ENCODE measurements at regions of chr1 and their contacts with region 1.

Region 1: DNA sequence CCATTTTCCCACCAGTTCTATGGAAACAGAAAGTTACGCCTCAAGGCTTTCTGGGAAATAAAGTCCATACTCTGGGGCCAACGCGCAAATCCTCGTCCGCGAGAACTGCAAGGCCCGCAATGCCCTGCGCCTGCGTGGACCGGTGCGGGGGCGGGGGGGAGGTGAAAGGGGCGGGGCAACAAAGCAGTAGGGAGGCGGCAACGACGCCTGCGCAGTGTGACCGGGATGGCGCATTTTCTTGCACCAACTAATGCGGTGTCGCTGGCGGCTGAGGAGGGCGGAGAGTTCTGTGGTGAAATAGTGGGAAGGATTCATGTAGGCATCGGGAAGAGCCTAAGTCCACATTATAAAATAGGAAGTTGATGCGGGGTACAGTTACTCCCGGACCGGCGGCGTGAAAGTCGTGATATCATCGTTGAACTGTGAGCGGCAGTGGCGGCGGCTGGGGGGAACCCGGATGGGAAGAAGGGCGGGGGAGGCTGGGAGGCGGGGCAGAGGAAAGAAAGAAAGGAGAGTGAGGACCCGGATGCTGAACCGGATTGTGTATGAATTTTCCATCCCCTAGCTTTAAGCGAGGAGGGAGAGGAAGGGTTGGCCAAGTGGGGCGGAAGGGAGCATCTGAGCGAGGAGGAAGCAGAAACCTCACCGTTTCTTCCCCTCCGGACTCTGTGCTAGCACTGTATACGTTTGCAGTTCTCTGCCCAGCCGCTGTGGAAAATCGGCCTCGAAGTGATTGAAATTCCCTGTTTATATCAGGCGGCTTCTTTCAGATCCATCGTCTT is at the start of gene GGPS1:
- DNase-seq: peak; percentile 99
- total RNA-seq, gene GGPS1: 30.8 to 36.9 TPM

Region 2: DNA sequence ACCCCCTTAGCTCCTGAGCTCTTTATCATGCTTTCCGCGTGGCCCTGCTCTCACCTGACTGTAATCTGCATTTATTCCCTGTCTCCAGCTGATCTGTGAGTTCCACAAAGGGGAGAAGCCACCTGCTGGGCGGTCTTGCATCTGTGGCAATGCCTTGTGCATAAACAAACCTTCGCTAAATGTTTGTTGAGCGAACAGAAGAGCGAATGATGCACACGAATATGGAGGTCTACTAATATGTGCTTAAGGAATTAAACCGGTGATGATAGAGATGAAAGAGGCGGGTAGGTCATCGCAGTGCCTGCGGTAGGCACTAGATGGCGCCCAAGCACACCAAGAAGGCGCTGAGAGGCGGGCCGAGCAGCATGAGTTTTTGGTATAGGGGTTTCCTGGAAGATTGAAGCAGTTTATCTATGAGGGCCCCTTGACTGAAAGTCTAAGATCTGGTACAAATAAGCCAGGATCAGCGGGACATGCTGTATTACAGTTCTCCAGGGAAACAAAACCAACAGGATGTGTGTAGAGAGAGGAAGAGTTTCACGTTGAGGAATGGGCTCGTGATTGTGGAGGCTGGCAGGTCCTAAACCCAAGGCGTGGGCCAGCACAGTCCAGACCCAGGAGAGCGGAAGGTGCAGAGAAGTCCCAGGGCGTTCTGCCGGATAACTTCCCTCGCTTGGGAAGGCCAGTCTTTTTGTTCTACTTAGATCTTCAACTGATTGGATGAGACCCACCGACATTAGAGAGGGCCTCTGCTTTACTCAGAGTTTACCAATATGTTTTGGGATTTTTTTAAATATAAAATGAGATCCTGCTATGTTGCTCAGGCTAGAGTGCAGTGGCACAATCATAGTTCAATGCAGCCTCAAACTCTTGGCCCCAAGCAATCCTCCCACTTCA is 234.6 kb before region 1 on chr1:
- intact Hi-C with region 1: no loop called
- DNase-seq: peak; percentile 93

Region 3: DNA sequence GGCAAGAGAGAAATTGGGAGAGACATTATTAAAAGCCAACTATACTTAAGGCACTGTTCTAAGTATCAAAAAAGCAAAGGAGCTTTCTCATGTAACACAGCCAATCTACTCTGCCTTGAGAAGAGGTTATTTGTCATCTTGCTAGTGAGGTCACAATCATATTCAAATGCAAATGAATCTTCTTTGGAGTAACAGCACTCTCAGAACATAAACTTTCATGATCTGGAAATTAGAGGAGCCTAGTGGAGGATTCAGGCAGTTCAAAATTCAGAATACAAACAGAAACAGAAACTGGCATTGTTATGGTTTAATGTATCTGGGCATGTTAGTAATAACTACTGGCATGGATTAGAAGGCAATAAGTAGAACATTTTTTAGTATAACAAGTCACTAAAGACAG is 57.9 kb before region 1 on chr1:
- intact Hi-C with region 1: loop called in 1 of 2 experiments (anchors 10 kb)
- DNase-seq: no peak

Region 4: DNA sequence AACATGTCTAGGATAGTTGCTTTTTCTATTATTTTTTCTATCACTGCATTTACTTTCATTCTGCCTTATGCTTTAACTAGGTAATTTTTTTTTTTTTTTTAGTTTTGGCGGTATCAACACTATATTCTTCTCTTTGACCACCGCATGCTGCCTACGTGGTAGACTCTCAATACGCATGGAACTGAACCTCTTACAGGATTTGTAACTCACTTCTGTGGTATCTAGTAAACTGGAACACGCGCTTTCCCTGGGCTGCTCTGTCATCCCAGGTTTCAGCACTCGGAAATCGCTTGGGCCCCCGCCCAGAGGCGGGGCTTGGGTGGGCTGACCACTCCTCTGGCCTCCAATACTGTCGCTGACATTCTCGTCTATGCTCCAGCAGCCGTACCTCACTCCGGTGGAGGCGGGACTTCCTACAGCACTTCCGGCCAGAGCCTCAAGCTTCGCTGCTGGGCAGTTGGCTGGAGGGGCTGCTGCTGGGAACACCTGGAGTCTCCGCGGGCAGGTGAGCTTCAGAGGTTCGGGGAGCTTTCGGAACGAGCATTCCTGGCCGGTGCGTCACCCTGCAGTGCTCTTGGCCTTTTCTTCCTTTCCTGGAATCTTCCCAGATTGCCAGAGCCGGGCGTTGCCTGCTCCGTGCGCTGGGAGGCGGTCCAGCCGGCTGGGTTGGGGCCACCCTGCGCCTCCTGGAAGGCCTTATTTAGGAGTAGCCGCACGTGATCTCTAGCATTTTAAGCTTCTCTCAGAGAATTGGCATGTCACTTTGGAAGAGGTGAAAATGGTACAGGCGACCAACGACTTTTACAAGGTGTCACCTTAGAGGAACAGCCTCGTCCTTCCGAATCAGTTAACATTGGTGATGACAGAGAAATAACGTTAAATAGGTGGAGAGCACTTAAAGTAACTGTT is 38.7 kb after region 1 on chr1 and contains the start of gene TBCE:
- intact Hi-C with region 1: no loop called
- DNase-seq: peak; percentile 99
- total RNA-seq, gene TBCE: 22.2 to 25.2 TPM

Region 5: DNA sequence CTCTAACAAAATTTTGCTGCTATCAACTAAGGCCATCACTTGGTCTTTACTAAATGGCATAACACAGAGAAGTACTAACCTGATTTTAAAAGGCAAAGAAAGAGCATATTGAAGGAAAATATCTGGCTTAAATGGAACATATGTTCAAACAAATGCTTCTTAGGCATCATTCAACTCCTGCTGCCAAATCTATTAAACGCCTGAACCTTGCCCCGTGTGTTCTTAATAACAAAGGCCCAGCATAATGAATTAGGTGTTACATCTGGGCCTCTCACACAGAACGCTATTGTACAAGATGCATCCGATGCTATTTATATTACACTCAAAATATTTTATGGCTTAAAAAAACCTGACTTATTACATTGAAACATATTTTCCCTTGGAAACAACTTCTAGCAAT is 127.3 kb after region 1 on chr1:
- intact Hi-C with region 1: no loop called
- DNase-seq: no peak

Measured in posterior vena cava (tissue), 2 donors.